ENCODE measurements at regions of chr16 and their contacts with region 1.

Region 1: DNA sequence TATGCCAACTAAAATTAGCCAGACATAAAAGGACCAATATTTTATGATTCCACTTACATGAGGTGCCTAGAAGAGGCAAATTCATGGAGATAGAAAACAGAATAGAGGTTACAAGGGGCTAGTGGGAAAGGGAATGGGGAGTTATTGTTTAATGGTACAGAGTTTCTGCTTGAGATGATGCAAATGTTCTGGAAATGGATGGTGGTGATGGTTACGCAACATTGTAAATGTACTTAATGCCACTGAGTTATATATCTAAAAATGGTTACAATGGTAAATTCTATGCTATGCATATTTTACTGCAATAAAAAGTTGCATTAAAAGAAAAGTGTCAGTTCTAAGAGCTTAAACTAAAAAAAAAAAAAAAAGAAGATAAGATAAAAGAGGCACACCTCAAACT is 17.9 kb downstream of the MT1X start:
- DNase-seq: no peak
- H3K4me3 ChIP-seq: no peak overlapping the region
- H3K4me3 Mint-ChIP-seq: no peak overlapping the region
- H3K27ac ChIP-seq: no peak overlapping the region
- H3K27ac Mint-ChIP-seq: peak overlapping the region in 3 of 7 donors; percentile 6 to 66 (median 66)
- H3K4me1 ChIP-seq: peaks cover 7% of the 10 kb centered on the region
- H3K4me1 Mint-ChIP-seq: peaks cover 7 to 8% (median 8%) of the 10 kb centered on the region in 4 donors
- H3K27me3 ChIP-seq: no peaks in the 10 kb centered on the region
- H3K27me3 Mint-ChIP-seq: no peaks in the 10 kb centered on the region

Region 2: GRCh38 chr16:56547120-56547948 is 152.9 kb before region 1 on chr16:
- CTCF ChIA-PET with region 1: interaction called, 11 read pairs
- POLR2A ChIA-PET with region 1: no interaction called
- intact Hi-C with region 1: no loop called
- DNase-seq: no peak
- H3K4me3 ChIP-seq: no peak overlapping the region
- H3K4me3 Mint-ChIP-seq: peak overlapping the region in 4 of 8 donors; percentile 41 to 61 (median 52)
- H3K27ac ChIP-seq: no peak overlapping the region
- H3K27ac Mint-ChIP-seq: peak overlapping the region in 6 of 7 donors; percentile 10 to 74 (median 46)
- H3K4me1 ChIP-seq: peaks cover 16% of the 10 kb centered on the region
- H3K4me1 Mint-ChIP-seq: peaks cover 8 to 23% (median 14%) of the 10 kb centered on the region in 4 donors
- H3K27me3 ChIP-seq: no peaks in the 10 kb centered on the region
- H3K27me3 Mint-ChIP-seq: peaks cover 0 to 6% of the 10 kb centered on the region in 2 donors

Region 3: GRCh38 chr16:56600398-56600999 is 99.7 kb before region 1 on chr16:
- CTCF ChIA-PET with region 1: interaction called, 37 read pairs
- POLR2A ChIA-PET with region 1: no interaction called
- intact Hi-C with region 1: no loop called
- DNase-seq: peak in 4 of 5 donors; percentile 38 to 43 (median 41)
- H3K4me3 ChIP-seq: no peak overlapping the region
- H3K4me3 Mint-ChIP-seq: no peak overlapping the region
- H3K27ac ChIP-seq: no peak overlapping the region
- H3K27ac Mint-ChIP-seq: peak overlapping the region in 3 of 7 donors; percentile 37 to 80 (median 66)
- H3K4me1 ChIP-seq: no peaks in the 10 kb centered on the region
- H3K4me1 Mint-ChIP-seq: peaks cover 0 to 7% (median 6%) of the 10 kb centered on the region in 4 donors
- H3K27me3 ChIP-seq: no peaks in the 10 kb centered on the region
- H3K27me3 Mint-ChIP-seq: peaks cover 6 to 12% of the 10 kb centered on the region in 2 donors

Region 4: GRCh38 chr16:56625140-56625942 is 74.9 kb before region 1 on chr16 and contains the start of gene MT1E:
- CTCF ChIA-PET with region 1: interaction called, 10 read pairs
- POLR2A ChIA-PET with region 1: no interaction called
- intact Hi-C with region 1: no loop called
- DNase-seq: peak in 4 of 5 donors; percentile 27 to 56 (median 50)
- H3K4me3 ChIP-seq: peak within 1 kb of the TSS; percentile 48 to 68
- H3K4me3 Mint-ChIP-seq: peak within 1 kb of the TSS; percentile 88 to 97 (median 94)
- H3K27ac ChIP-seq: peak within 1 kb of the TSS; percentile 24
- H3K27ac Mint-ChIP-seq: peak within 1 kb of the TSS; percentile 44 to 95 (median 86)
- H3K4me1 ChIP-seq: peaks cover 14% of the 10 kb centered on the region
- H3K4me1 Mint-ChIP-seq: peaks cover 11 to 18% (median 12%) of the 10 kb centered on the region in 4 donors
- H3K27me3 ChIP-seq: peaks cover 9% of the 10 kb centered on the region
- H3K27me3 Mint-ChIP-seq: peaks cover 0 to 31% of the 10 kb centered on the region in 2 donors
- total RNA-seq, gene MT1E: not detected

Region 5: DNA sequence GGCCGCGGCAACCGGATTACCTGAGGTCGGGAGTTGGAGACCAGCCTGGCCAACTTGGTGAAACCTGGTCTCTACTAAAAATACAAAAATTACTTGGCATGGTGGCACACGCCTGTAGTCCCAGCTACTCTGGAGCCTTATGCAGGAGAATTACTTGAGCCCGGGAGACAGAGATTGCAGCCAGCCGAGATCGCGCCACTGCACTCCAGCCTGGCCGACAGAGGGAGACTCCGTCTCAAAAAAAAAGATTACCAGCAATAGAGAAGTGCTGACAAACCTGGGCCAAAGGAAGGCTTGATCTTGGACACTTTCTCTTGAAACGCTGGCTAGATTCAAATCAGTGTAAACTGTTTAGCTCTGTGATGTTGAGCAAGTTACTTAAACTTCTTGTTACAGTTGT is 26.3 kb before region 1 on chr16:
- CTCF ChIA-PET with region 1: interaction called, 9 read pairs
- POLR2A ChIA-PET with region 1: interaction called, 3 read pairs
- intact Hi-C with region 1: loop called (anchors 1 kb)
- DNase-seq: peak in 2 of 5 donors; percentile 15 to 47
- H3K4me3 ChIP-seq: no peak overlapping the region
- H3K4me3 Mint-ChIP-seq: peak overlapping the region in 3 of 8 donors; percentile 7 to 27 (median 21)
- H3K27ac ChIP-seq: no peak overlapping the region
- H3K27ac Mint-ChIP-seq: no peak overlapping the region
- H3K4me1 ChIP-seq: peaks cover 14% of the 10 kb centered on the region
- H3K4me1 Mint-ChIP-seq: peaks cover 10 to 18% (median 15%) of the 10 kb centered on the region in 4 donors
- H3K27me3 ChIP-seq: peaks cover 13% of the 10 kb centered on the region
- H3K27me3 Mint-ChIP-seq: peaks cover 21 to 38% of the 10 kb centered on the region in 2 donors

Region 6: GRCh38 chr16:56729735-56730662 is 29.8 kb after region 1 on chr16 and contains the start of gene NUP93:
- CTCF ChIA-PET with region 1: interaction called, 14 read pairs
- POLR2A ChIA-PET with region 1: no interaction called
- intact Hi-C with region 1: no loop called
- DNase-seq: peak; percentile 87 to 92 (median 89)
- H3K4me3 ChIP-seq: peak within 1 kb of the TSS; percentile 76 to 81
- H3K4me3 Mint-ChIP-seq: peak within 1 kb of the TSS in 4 of 8 donors; percentile 85 to 95 (median 93)
- H3K27ac ChIP-seq: peak within 1 kb of the TSS; percentile 70
- H3K27ac Mint-ChIP-seq: peak within 1 kb of the TSS in 6 of 7 donors; percentile 82 to 98 (median 96)
- H3K4me1 ChIP-seq: peaks cover 35% of the 10 kb centered on the region
- H3K4me1 Mint-ChIP-seq: peaks cover 13 to 36% (median 14%) of the 10 kb centered on the region in 4 donors
- H3K27me3 ChIP-seq: no peaks in the 10 kb centered on the region
- H3K27me3 Mint-ChIP-seq: no peaks in the 10 kb centered on the region
- total RNA-seq, gene NUP93: 48.0 to 56.5 TPM

Region 7: DNA sequence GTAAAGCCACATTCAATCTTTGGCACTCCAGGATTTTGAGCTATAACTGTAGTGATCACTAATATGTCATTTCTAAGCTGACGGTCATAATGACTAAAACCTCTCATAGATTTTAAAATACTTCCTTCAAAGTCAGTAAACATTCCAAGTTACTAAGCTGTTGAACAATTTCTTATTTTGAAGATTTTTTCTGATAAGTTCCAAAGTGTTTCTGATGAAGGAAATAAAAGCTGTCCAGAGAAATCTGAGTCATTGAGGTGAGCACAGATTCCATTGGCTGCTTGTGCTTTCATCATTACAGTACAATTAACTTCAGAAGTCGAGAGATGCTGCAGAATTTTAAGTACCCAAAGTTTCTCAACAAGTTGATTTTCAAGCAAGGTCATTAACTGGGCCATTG is 313.0 kb after region 1 on chr16:
- CTCF ChIA-PET with region 1: no interaction called
- POLR2A ChIA-PET with region 1: no interaction called
- intact Hi-C with region 1: no loop called
- DNase-seq: no peak
- H3K4me3 ChIP-seq: no peak overlapping the region
- H3K4me3 Mint-ChIP-seq: peak overlapping the region in 6 of 8 donors; percentile 63 to 89 (median 78)
- H3K27ac ChIP-seq: peak overlapping the region; percentile 79
- H3K27ac Mint-ChIP-seq: peak overlapping the region; percentile 83 to 98 (median 97)
- H3K4me1 ChIP-seq: peaks cover 98% of the 10 kb centered on the region
- H3K4me1 Mint-ChIP-seq: peaks cover 52 to 90% (median 69%) of the 10 kb centered on the region in 4 donors
- H3K27me3 ChIP-seq: no peaks in the 10 kb centered on the region
- H3K27me3 Mint-ChIP-seq: no peaks in the 10 kb centered on the region